ENCODE measurements at regions of chr10 and their contacts with region 1.

Region 1: GRCh38 chr10:72340510-72341261 is 14.0 kb downstream of the DNAJB12 start:
- DNase-seq: peak in 5 of 6 donors; percentile 49 to 89 (median 79)
- ATAC-seq: peak in 3 of 4 donors; percentile 23 to 40 (median 38)
- H3K4me3 ChIP-seq: no peak overlapping the region
- H3K27ac ChIP-seq: peak overlapping the region in 2 of 4 donors; percentile 4 to 15
- H3K4me1 ChIP-seq: peaks cover 14 to 16% (median 15%) of the 10 kb centered on the region in 3 donors
- H3K27me3 ChIP-seq: no peaks in the 10 kb centered on the region
- CTCF ChIP-seq: peak; percentile 92 to 96 (median 94)

Region 2: DNA sequence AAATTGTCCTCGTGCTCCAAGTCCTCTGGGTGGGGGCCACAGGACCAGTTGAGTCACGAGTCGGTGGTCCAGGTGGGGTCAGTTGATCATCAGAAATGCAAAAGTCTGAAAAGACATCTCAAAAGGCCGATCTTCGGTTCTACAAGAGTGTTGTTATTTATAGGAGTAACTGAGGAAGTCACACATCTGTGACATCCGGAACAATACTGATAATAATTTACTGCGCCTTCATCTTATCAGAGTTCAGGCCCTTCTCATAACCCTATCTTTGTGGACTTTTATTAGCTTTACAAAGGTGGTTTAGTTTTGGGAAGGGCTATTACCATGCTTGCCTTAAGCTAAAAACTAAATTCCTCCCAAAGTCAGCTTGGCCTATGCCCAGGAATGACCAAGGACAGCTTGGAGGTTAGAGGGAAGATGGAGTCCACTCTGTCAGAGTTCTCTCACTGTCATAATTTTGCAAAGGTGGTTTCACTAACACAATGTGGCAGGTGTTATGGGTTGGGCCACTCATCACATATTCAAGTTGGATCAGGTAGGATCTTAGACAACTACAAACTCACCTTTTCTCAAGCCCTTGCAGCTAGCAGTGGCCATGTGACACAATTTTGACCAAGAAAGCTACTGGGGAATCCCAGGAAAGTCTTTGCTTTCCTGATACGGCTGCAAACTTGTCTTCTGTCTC is 431.1 kb before region 1 on chr10:
- intact Hi-C with region 1: loop called in 1 of 3 experiments (anchors 10 kb)
- DNase-seq: no peak
- ATAC-seq: no peak
- H3K4me3 ChIP-seq: no peak overlapping the region
- H3K27ac ChIP-seq: no peak overlapping the region
- H3K4me1 ChIP-seq: no peaks in the 10 kb centered on the region
- H3K27me3 ChIP-seq: no peaks in the 10 kb centered on the region
- CTCF ChIP-seq: no peak

Region 3: DNA sequence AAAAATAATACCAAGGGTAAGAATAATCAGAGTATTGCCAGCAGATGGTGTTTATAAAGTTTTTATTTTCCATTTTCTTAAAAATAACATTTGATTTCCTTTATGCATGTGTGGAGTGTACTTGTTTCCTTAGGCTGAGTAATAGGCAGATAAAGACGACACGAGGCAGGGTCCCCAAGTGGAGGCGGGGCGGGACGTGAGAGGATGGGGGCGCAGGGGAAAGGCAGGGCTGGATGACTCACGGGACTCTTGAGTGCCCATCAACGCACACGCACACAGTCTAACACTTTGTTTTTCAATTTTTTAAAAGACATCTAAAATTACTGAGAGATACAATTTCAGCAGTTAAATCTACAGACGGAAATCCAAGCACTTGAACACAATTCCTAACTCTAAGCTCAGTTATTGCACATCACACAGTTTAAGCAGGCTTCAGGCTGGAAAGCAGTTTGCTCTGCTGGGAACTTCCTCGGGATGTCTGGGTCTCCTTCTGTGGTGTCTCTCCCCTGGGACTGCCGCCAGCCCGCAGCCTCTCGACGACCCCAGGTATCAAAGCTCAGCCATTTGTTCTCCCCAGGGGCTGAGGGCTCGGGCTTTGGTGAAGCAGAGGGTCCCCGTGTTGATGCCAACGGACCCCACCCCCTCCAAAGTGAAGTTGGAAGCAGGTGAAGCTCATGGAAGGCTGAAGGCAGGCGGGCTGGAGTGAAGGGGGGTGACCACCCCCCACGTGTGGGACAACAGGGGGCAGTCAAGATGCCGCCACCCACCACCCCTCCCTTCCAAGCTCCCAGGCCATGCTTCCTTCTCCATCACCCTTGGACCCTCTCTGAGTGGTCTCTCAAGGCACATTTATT is 281.5 kb before region 1 on chr10:
- intact Hi-C with region 1: loop called in 1 of 3 experiments (anchors 10 kb)
- DNase-seq: peak in 1 of 6 donors; percentile 35
- ATAC-seq: no peak
- H3K4me3 ChIP-seq: no peak overlapping the region
- H3K27ac ChIP-seq: no peak overlapping the region
- H3K4me1 ChIP-seq: peaks cover 7 to 23% (median 22%) of the 10 kb centered on the region in 3 donors
- H3K27me3 ChIP-seq: no peaks in the 10 kb centered on the region
- CTCF ChIP-seq: no peak